ENCODE measurements at regions of chr6 and their contacts with region 1.

Region 1: DNA sequence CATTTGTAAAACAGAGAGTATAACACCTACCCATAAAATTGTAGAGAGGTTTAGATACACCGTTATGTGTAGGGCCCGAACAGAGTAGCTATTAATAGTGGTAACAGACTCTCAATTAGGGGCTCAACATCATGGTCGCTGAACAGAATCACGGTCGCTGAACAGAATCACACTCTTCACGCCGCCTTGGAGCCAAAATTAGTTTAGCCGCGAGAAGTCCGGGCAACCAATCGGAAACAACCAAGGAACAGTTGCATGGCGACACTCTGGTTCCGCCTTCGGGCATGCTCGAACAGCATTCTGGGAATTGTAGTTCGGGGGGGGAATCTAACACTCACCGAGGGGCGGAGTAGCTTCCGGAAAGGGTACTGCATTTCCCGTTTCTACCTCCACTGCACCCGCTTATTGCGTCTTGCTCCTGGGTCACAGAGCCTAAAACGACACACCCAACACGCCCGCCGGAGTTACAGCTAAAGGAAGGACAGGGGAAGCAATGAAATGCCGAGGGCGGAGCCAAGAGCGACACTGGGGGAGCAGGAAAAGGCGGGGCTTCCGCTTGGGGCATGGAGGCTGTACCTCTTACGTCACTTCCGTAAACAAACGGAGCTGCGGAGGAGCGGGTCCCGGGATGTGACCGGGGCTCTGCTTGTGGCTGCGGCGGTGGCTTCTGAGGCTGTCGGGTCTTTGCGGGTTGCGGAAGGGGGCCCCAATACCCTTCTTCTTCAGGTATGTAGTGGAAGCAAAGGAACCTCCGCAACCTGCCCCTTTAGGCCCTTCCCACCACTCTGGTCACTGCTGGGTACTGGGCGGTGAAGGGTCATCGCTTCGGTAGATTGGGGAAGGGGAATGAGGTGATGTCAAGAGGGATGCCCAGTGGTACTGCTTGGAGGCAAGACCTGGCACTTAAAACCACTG is at the start of gene CCDC28A:
- DNase-seq: peak; percentile 97
- H3K4me3 ChIP-seq: peak within 1 kb of the TSS; percentile 61 to 84 (median 83)
- H3K27ac ChIP-seq: peak within 1 kb of the TSS; percentile 95
- H3K4me1 ChIP-seq: peaks cover 23% of the 10 kb centered on the region
- H3K27me3 ChIP-seq: no peaks in the 10 kb centered on the region
- CTCF ChIP-seq: no peak
- POLR2A ChIP-seq: no peak
- total RNA-seq, gene CCDC28A: 10.5 and 12.8 TPM in 2 replicates

Region 2: DNA sequence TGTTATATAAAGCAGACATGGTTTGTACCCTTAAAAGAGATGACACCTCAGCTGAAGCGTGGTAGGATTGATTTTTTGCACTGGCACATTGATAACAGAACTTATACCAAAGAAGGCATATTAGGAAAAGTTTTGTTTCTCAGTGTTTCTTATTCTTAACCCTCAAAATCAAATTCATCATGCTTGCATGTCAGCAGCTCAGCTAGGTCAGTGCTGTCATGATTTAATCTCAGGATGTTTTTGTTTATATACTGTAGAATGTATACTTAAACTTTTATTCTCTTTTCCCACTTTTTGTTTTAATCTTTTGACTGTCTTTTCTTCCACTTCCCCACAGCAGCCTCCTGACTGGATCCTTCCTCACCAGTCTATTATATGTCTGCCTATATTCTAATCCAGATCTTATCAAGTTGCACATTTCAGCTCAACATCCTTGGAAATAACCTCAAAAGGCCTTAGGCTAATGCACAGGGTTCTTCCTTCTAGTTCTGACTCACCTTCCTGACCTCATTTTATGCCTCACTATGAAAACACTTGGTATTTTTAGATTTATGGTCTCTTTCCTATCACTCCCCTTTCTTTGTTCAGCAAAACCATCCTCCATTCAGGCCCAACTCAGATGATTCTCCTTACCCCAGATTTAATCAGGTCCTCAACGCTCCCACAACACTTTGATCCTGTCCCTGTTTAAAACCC is 362.3 kb before region 1 on chr6:
- CTCF ChIA-PET with region 1: no interaction called
- POLR2A ChIA-PET with region 1: no interaction called
- dilution Hi-C with region 1: no loop called
- intact Hi-C with region 1: loop called (anchors 5 kb)
- DNase-seq: peak; percentile 91
- H3K4me3 ChIP-seq: no peak overlapping the region
- H3K27ac ChIP-seq: peak overlapping the region; percentile 98
- H3K4me1 ChIP-seq: peaks cover 26% of the 10 kb centered on the region
- H3K27me3 ChIP-seq: no peaks in the 10 kb centered on the region
- CTCF ChIP-seq: no peak
- POLR2A ChIP-seq: peak; percentile 68

Region 3: GRCh38 chr6:138844192-138844591 is 70.8 kb after region 1 on chr6:
- CTCF ChIA-PET with region 1: no interaction called
- POLR2A ChIA-PET with region 1: no interaction called
- dilution Hi-C with region 1: no loop called
- intact Hi-C with region 1: no loop called
- DNase-seq: no peak
- H3K4me3 ChIP-seq: no peak overlapping the region
- H3K27ac ChIP-seq: no peak overlapping the region
- H3K4me1 ChIP-seq: no peaks in the 10 kb centered on the region
- H3K27me3 ChIP-seq: no peaks in the 10 kb centered on the region
- CTCF ChIP-seq: no peak
- POLR2A ChIP-seq: no peak

Measured in endothelial cell of umbilical vein (primary cell).